ENCODE measurements at regions of chr15 and their contacts with region 1.

Region 1: DNA sequence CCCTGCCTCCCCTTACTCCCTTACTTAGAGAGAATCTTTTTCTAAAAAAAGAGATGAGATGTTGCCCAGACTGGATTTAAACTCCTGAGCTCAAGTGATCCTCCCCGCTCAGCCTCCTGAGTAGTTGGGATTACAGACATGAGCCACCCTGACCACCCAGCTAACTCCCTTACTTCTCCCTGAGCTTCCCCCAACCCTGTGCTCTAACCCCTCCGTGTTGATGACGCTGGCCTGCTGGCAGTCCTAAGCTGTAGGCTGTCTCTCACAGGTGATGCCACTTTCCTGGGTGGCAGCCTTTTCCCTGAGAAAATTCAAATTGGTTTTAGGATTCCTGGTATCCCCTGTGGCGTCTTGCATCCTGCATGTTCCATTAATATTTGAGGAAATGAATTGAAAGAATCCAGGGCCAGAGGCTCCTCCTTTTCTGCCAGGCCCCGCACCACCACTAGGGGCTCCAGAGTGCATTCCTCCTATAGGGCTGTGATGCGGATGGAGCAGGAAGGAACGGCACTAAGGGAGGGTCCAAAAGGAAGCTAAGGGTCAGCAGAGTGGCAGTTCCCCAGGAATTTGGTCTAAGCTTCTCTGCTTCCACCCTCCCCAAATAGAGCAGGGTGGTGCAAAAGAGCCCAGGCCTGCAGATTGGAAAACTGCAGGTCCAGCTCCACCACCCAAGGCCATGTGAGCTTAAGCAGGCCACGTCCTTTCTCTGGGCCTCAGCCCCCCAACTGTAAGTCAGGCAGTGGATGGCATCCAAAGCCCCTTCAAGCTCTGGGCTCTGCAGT is 101.1 kb downstream of the DAPK2 start:
- DNase-seq: peak; percentile 78
- H3K4me3 Mint-ChIP-seq: no peak overlapping the region
- H3K27ac Mint-ChIP-seq: no peak overlapping the region
- H3K4me1 Mint-ChIP-seq: peaks cover 5% of the 10 kb centered on the region
- H3K27me3 Mint-ChIP-seq: no peaks in the 10 kb centered on the region

Region 2: GRCh38 chr15:63600616-63601025 is 344.6 kb before region 1 on chr15:
- CTCF ChIA-PET with region 1: no interaction called
- DNase-seq: peak; percentile 92
- H3K4me3 Mint-ChIP-seq: peak overlapping the region; percentile 91
- H3K27ac Mint-ChIP-seq: peak overlapping the region; percentile 97
- H3K4me1 Mint-ChIP-seq: peaks cover 61% of the 10 kb centered on the region
- H3K27me3 Mint-ChIP-seq: peaks cover 11% of the 10 kb centered on the region

Region 3: GRCh38 chr15:63928185-63928842 is 16.9 kb before region 1 on chr15:
- CTCF ChIA-PET with region 1: interaction called, 18 read pairs
- DNase-seq: no peak
- H3K4me3 Mint-ChIP-seq: no peak overlapping the region
- H3K27ac Mint-ChIP-seq: no peak overlapping the region
- H3K4me1 Mint-ChIP-seq: no peaks in the 10 kb centered on the region
- H3K27me3 Mint-ChIP-seq: peaks cover 35% of the 10 kb centered on the region

Region 4: GRCh38 chr15:63933522-63933921 is 11.7 kb before region 1 on chr15:
- CTCF ChIA-PET with region 1: interaction called, 18 read pairs
- DNase-seq: no peak
- H3K4me3 Mint-ChIP-seq: no peak overlapping the region
- H3K27ac Mint-ChIP-seq: no peak overlapping the region
- H3K4me1 Mint-ChIP-seq: peaks cover 13% of the 10 kb centered on the region
- H3K27me3 Mint-ChIP-seq: peaks cover 18% of the 10 kb centered on the region

Region 5: DNA sequence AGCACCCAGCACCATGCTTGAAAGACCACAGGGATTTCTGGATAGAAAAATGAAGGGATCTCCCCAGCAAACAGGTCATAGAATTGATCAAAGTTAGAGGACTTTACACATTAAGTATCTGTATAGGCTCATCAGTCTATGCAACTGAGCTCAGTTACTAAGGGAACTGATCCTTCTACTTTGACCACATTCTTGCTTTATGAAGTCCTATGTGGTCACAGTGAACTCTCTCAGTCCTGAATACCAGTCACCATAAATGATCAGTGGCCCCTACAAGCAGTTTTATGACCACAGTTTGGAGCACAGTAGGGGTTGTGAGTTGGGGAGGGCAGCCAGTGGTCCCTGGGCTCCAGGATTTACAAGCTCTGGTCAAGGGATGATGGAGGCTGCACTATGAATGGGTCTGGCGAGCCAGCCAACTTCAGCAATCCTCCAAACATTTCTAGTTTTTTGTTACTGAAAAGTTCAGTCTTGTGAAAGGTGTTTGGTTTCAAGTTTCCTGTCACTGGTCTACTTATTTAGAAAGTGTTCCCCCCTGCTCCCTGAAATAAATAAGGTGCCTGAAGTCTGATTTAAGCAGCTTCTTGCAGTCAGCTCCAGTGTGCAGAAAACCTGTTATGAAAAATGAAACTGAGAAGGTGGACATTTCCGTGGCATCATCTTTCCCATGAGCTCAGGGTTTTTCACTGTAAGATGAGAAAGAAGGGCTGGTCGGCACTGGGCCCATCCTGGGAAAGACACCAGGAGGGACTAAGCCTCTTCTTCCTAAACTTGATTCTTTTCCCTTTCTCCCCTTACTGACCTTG is 25.6 kb after region 1 on chr15:
- CTCF ChIA-PET with region 1: interaction called, 38 read pairs
- DNase-seq: peak; percentile 36
- H3K4me3 Mint-ChIP-seq: peak overlapping the region; percentile 27
- H3K27ac Mint-ChIP-seq: peak overlapping the region; percentile 95
- H3K4me1 Mint-ChIP-seq: peaks cover 41% of the 10 kb centered on the region
- H3K27me3 Mint-ChIP-seq: peaks cover 5% of the 10 kb centered on the region

Region 6: GRCh38 chr15:64010719-64011118 is 65.5 kb after region 1 on chr15:
- CTCF ChIA-PET with region 1: interaction called, 25 read pairs
- DNase-seq: peak; percentile 92
- H3K4me3 Mint-ChIP-seq: peak overlapping the region; percentile 18
- H3K27ac Mint-ChIP-seq: peak overlapping the region; percentile 91
- H3K4me1 Mint-ChIP-seq: peaks cover 41% of the 10 kb centered on the region
- H3K27me3 Mint-ChIP-seq: peaks cover 4% of the 10 kb centered on the region

Region 7: GRCh38 chr15:64046347-64047153 is 101.4 kb after region 1 on chr15 and contains the start of gene DAPK2:
- CTCF ChIA-PET with region 1: interaction called, 56 read pairs
- DNase-seq: peak; percentile 73
- H3K4me3 Mint-ChIP-seq: peak within 1 kb of the TSS; percentile 64
- H3K27ac Mint-ChIP-seq: peak within 1 kb of the TSS; percentile 19
- H3K4me1 Mint-ChIP-seq: peaks cover 4% of the 10 kb centered on the region
- H3K27me3 Mint-ChIP-seq: peaks cover 70% of the 10 kb centered on the region